ENCODE measurements at regions of chr1 and their contacts with region 1.

Region 1: DNA sequence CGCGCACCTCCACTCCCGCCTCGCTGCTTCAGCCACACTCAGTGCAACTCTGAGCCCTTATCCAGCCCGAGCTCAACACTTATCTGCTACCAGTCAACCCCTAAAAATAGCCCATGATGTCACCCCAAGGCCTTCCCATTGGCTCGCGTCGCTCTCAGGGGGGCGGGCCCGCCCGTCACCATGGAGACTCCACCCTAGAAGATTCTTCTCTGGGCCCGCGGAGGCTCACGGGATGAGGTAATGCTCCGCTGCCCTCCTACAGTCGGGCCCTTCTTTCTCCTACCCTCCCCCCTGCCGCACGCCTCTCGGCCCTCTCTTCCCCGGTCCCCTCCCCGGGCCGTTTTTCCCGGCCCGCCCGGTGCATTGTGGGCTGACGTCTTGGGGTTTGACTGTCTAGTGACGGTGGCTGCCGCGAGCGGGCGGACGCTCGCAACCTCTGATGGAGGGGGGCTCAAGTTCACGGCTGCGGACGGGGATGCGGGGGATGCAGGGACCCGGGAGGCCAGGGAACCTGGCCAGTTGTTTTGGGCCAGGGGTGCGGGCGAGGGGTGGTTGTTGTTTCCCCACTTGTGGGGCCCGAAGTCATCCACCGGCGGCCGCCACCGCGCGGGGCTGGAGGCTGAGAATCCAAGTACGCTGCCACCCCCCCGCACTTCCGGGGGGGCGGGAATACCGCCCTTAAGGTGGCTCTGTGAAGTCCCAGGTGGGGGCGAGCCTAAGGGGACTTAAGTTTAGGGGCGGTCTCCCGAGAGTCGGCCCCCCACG is at the start of gene JUN:
- DNase-seq: peak; percentile 100
- ATAC-seq: peak; percentile 76 to 89 (median 80)
- H3K4me3 ChIP-seq: peak within 1 kb of the TSS; percentile 99
- H3K27ac ChIP-seq: peak within 1 kb of the TSS; percentile 100
- H3K4me1 ChIP-seq: peaks cover 19% of the 10 kb centered on the region
- H3K27me3 ChIP-seq: no peaks in the 10 kb centered on the region
- CTCF ChIP-seq: no peak
- total RNA-seq, gene JUN: 93.8 to 213 (median 164) TPM

Region 2: GRCh38 chr1:58500043-58500442 is 284.1 kb before region 1 on chr1:
- intact Hi-C with region 1: no loop called
- DNase-seq: no peak
- ATAC-seq: no peak
- H3K4me3 ChIP-seq: no peak overlapping the region
- H3K27ac ChIP-seq: no peak overlapping the region
- H3K4me1 ChIP-seq: no peaks in the 10 kb centered on the region
- H3K27me3 ChIP-seq: no peaks in the 10 kb centered on the region
- CTCF ChIP-seq: no peak

Region 3: GRCh38 chr1:58903514-58904298 is 119.5 kb after region 1 on chr1:
- intact Hi-C with region 1: loop called (anchors 2 to 5 kb)
- DNase-seq: peak; percentile 95 to 97
- ATAC-seq: peak; percentile 90 to 94 (median 92)
- H3K4me3 ChIP-seq: peak overlapping the region; percentile 72
- H3K27ac ChIP-seq: peak overlapping the region; percentile 95
- H3K4me1 ChIP-seq: peaks cover 59% of the 10 kb centered on the region
- H3K27me3 ChIP-seq: no peaks in the 10 kb centered on the region
- CTCF ChIP-seq: no peak

Region 4: DNA sequence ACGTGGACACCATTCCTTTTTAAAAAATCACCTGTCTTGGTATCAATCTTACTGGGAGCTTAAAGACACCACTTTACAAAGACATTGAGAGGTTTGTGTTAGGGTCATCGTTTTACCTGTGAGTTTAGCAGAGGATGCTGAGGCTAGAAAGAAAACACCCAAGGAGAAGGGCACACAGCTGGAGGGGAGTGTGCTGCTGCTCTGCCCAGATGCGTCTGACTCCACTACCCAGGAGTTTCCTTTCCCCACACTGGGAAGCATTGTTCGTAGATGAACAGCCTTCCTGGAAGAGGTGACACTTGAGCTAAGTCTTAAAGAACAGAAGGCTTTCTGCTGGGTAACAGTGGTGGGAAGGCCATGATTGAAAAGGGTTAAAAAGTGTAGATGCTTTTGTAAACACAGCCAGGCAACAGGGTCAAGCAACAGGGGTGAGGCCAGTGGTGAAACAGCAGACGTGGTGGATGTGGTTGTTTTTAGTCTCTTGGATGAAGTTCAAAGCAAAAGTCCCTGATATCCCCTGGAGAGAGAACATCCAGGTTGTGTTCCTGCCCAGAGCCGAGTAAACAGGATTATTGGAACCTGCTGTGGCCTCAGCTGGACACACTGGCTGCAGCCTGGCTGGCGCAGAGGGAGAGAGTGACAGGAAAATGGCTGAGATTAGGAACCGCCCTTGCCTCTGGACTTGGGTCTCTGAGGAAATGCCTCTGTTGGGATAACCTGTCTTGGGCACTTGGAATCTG is 198.3 kb after region 1 on chr1:
- intact Hi-C with region 1: loop called in 1 of 2 experiments (anchors 5 kb)
- DNase-seq: peak; percentile 43 to 80
- ATAC-seq: peak; percentile 83 to 95 (median 92)
- H3K4me3 ChIP-seq: no peak overlapping the region
- H3K27ac ChIP-seq: peak overlapping the region; percentile 75
- H3K4me1 ChIP-seq: peaks cover 27% of the 10 kb centered on the region
- H3K27me3 ChIP-seq: no peaks in the 10 kb centered on the region
- CTCF ChIP-seq: no peak

Region 5: GRCh38 chr1:59150577-59151391 is 366.6 kb after region 1 on chr1:
- intact Hi-C with region 1: loop called in 1 of 2 experiments (anchors 5 kb)
- DNase-seq: peak; percentile 87 to 94
- ATAC-seq: peak; percentile 92 to 97 (median 95)
- H3K4me3 ChIP-seq: peak overlapping the region; percentile 50
- H3K27ac ChIP-seq: peak overlapping the region; percentile 89
- H3K4me1 ChIP-seq: peaks cover 45% of the 10 kb centered on the region
- H3K27me3 ChIP-seq: no peaks in the 10 kb centered on the region
- CTCF ChIP-seq: no peak

Region 6: GRCh38 chr1:59699227-59699847 is 915.2 kb after region 1 on chr1:
- intact Hi-C with region 1: loop called in 1 of 2 experiments (anchors 2 kb)
- DNase-seq: no peak
- ATAC-seq: peak; percentile 56 to 68 (median 65)
- H3K4me3 ChIP-seq: peak overlapping the region; percentile 59
- H3K27ac ChIP-seq: peak overlapping the region; percentile 87
- H3K4me1 ChIP-seq: peaks cover 58% of the 10 kb centered on the region
- H3K27me3 ChIP-seq: no peaks in the 10 kb centered on the region
- CTCF ChIP-seq: peak; percentile 96